Ascending aorta (tissue), 2 donors: ENCODE measurements at regions of chr19 and their contacts with region 1.

Region 1: DNA sequence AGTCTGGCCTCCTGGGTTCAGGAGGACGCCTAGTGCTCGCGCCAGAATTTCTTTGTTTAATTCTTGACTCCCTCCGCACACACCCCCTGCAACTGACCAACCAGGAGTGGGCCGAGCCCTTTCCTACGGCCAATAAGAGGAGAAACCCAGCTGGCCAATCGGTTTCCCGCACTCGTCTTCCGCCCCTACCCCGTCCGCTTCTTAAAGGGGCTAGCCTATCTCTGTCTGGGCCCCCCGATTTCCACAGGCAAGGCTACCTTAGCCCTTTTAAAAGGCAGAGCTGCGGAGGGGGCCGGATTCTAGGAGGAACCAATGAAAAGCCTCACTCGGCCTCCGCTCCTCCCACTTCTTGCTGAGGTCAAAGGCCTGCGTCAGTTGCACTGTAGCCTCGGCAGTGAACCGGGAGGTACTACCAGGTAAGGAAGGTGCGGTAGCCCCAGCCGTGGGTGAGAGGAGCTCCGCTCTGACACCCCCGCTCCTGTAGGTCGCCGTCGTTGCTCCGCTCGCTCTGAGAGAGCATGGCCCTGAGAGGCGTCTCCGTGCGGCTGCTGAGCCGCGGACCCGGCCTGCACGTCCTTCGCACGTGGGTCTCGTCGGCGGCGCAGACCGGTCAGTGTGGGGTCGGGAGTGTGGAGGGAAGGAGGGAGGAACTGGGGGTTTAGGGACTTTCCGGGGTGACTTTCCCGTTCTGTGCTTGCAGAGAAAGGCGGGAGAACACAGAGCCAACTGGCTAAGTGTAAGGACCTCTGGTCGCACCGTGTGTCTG is at the start of gene GCDH:
- DNase-seq: peak; percentile 97 to 99
- H3K4me3 ChIP-seq: peak within 1 kb of the TSS; percentile 77 to 92
- H3K27ac ChIP-seq: peak within 1 kb of the TSS; percentile 59 to 78
- H3K4me1 ChIP-seq: peaks cover 8 to 10% of the 10 kb centered on the region in 2 donors
- H3K27me3 ChIP-seq: no peaks in the 10 kb centered on the region
- CTCF ChIP-seq: no peak
- total RNA-seq, gene GCDH: 20.6 TPM

Region 2: GRCh38 chr19:12736995-12737834 is 153.8 kb before region 1 on chr19 and contains the start of gene GET3:
- intact Hi-C with region 1: loop called (anchors 1 kb)
- DNase-seq: peak; percentile 93 to 98
- H3K4me3 ChIP-seq: peak within 1 kb of the TSS; percentile 70 to 80
- H3K27ac ChIP-seq: peak within 1 kb of the TSS; percentile 78 to 90
- H3K4me1 ChIP-seq: peaks cover 20 to 28% of the 10 kb centered on the region in 2 donors
- H3K27me3 ChIP-seq: no peaks in the 10 kb centered on the region
- CTCF ChIP-seq: peak in 2 of 3 experiments; percentile 5 to 15
- total RNA-seq, gene GET3: 43.6 TPM

Region 3: GRCh38 chr19:12913851-12914690 is 23.1 kb after region 1 on chr19:
- intact Hi-C with region 1: loop called (anchors 1 kb)
- DNase-seq: no peak
- H3K4me3 ChIP-seq: no peak overlapping the region
- H3K27ac ChIP-seq: no peak overlapping the region
- H3K4me1 ChIP-seq: peaks cover 3 to 15% of the 10 kb centered on the region in 2 donors
- H3K27me3 ChIP-seq: no peaks in the 10 kb centered on the region
- CTCF ChIP-seq: no peak

Region 4: DNA sequence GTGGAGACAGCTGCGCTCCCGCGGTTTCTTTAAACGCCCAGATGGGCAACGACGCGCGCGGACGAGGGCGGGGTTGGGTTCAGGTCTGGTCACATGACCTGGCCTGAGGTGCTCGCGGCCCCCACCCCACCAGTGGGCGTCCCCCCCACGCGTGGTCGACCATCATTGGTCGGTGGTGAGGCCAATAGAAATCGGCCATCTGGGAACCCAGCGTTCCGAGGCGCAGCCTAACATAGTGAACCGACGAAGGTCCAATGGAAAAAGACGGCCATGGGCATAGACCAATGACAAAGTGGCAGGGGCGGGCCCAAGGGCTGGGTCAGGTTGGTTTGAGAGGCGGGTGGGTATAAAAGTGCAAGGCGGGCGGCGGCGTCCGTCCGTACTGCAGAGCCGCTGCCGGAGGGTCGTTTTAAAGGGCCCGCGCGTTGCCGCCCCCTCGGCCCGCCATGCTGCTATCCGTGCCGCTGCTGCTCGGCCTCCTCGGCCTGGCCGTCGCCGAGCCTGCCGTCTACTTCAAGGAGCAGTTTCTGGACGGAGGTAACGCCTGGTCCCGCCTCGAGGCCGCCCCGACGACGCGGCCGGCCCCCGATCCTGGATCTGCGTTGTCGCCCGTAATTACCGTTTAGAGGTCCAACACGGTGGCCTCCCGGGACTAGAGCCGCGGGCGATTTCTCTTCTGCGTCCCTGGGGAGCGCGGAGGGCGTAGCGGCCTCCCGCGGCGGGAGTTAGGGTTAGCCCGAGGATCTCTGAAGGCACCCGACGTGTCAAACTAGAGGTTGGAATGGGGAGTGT is 47.5 kb after region 1 on chr19 and contains the start of gene CALR:
- intact Hi-C with region 1: loop called (anchors 5 kb)
- DNase-seq: peak; percentile 100
- H3K4me3 ChIP-seq: peak within 1 kb of the TSS; percentile 92 to 98
- H3K27ac ChIP-seq: peak within 1 kb of the TSS; percentile 89 to 95
- H3K4me1 ChIP-seq: peaks cover 15 to 41% of the 10 kb centered on the region in 2 donors
- H3K27me3 ChIP-seq: no peaks in the 10 kb centered on the region
- CTCF ChIP-seq: peak in 2 of 3 experiments; percentile 22 to 54
- total RNA-seq, gene CALR: 297 TPM